PC-9 (cell line): ENCODE measurements at regions of chr3 and their contacts with region 1.

Region 1: DNA sequence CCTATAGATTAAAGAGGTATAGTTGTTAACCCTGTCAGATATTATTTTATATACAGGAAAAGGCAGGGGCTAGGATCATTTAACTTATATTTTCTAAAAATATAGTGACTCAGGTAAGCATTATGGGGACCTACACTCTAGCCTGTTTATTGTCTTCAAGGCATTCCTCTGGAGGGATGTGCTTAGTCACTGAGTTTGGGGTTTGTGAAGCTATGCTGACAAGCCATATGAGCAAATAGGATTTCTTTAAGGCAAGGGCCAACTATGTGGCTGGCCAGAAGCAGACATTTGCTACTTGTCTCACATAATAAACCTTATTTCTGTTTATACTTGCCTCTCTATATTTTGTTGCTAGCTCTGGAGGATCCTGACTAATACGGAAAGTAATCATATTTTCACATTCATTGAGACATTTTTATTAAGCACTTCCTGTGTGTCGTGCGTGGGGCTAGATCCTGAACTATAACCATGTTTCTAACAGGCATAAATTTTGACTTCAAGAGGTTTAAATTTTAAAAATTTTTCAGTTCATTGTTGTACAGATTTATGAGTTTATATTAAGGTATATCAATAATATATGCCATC is 153.4 kb downstream of the OTOL1 start:
- DNase-seq: no peak
- H3K4me3 ChIP-seq: no peak overlapping the region
- H3K27ac ChIP-seq: no peak overlapping the region
- H3K4me1 ChIP-seq: no peaks in the 10 kb centered on the region
- H3K27me3 ChIP-seq: no peaks in the 10 kb centered on the region
- CTCF ChIP-seq: no peak

Region 2: GRCh38 chr3:161508863-161509477 is 141.0 kb before region 1 on chr3:
- CTCF ChIA-PET with region 1: no interaction called
- POLR2A ChIA-PET with region 1: no interaction called
- intact Hi-C with region 1: loop called (anchors 10 kb)
- DNase-seq: no peak
- H3K4me3 ChIP-seq: no peak overlapping the region
- H3K27ac ChIP-seq: no peak overlapping the region
- H3K4me1 ChIP-seq: no peaks in the 10 kb centered on the region
- H3K27me3 ChIP-seq: no peaks in the 10 kb centered on the region
- CTCF ChIP-seq: peak; percentile 75

Region 3: DNA sequence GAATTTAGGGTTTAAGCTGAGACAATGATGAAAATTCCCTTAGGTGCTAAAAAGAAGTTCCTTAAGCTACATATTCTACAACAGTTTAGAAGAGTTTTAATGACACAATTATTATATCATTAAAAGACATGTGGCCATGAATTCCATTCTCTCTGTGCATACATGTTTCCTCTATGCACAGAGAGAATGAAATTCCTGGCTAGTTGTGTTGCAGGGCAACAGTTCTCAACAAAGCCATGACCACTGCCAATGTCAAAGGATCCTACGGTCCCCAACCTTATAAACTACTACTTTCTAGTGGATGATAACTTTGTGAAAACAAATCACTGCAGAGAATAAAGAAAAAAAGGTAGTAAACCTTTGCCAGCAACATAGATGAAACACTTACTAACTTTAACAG is 30.6 kb before region 1 on chr3:
- CTCF ChIA-PET with region 1: no interaction called
- POLR2A ChIA-PET with region 1: no interaction called
- intact Hi-C with region 1: loop called (anchors 1 kb)
- DNase-seq: no peak
- H3K4me3 ChIP-seq: no peak overlapping the region
- H3K27ac ChIP-seq: no peak overlapping the region
- H3K4me1 ChIP-seq: no peaks in the 10 kb centered on the region
- H3K27me3 ChIP-seq: no peaks in the 10 kb centered on the region
- CTCF ChIP-seq: no peak

Region 4: DNA sequence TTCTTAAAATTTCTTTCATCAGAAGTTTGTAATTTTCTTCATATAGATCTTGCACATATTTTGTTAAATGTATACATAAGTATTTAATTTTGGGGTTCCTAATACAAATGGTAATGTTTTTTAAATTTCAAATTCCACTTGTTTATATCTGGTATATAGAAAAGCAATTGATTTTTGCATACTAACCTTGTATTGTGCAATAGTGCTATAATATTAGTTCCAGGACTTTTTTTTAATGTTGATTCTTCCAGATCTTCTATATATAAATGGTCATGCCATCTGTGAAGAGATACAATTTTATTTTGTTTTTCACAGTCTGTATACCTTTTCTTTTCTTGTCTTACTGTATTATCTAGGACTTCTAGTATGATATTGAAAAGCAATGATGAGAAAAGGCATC is 511.6 kb after region 1 on chr3:
- CTCF ChIA-PET with region 1: no interaction called
- POLR2A ChIA-PET with region 1: no interaction called
- intact Hi-C with region 1: no loop called
- DNase-seq: no peak
- H3K4me3 ChIP-seq: no peak overlapping the region
- H3K27ac ChIP-seq: no peak overlapping the region
- H3K4me1 ChIP-seq: no peaks in the 10 kb centered on the region
- H3K27me3 ChIP-seq: no peaks in the 10 kb centered on the region
- CTCF ChIP-seq: no peak